H1 (cell line): ENCODE measurements at regions of chr15 and their contacts with region 1.

Region 1: GRCh38 chr15:101014921-101015841 is 96.0 kb downstream of the LRRK1 start:
- DNase-seq: peak in 1 of 2 experiments; percentile 92
- H3K4me3 ChIP-seq: no peak overlapping the region
- H3K27ac ChIP-seq: no peak overlapping the region
- H3K4me1 ChIP-seq: peaks cover 0 to 9% (median 4%) of the 10 kb centered on the region in 4 experiments; a peak in 5 of 7 replicates
- H3K27me3 ChIP-seq: no peaks in the 10 kb centered on the region
- CTCF ChIP-seq: peak; percentile 88 to 97 (median 95)
- EP300 ChIP-seq: no peak
- POLR2A ChIP-seq: no peak
- RAD21 ChIP-seq: peak; percentile 98 to 99

Region 2: DNA sequence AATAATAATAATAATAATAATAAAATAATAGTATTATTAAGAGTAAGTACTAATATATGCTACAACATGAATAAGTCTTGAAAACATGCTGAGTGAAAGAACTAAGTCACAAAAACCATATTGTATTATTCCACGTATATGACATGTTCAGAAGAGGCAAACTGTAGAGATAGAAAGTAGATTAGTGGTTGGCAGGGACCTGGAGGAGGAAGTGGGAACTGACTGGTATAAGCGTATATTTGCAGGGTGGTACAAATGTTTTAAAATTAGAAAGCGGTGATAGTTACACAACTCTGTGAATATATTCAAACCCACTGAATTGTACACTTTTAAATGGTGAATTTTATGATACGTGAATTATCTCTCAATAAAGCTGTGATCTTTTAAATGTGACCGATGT is 63.2 kb before region 1 on chr15:
- CTCF ChIA-PET with region 1: no interaction called
- POLR2A ChIA-PET with region 1: no interaction called
- DNase-seq: no peak
- H3K4me3 ChIP-seq: no peak overlapping the region
- H3K27ac ChIP-seq: no peak overlapping the region
- H3K4me1 ChIP-seq: peaks cover 0 to 5% (median 2%) of the 10 kb centered on the region in 4 experiments; a peak in 3 of 7 replicates
- H3K27me3 ChIP-seq: no peaks in the 10 kb centered on the region
- CTCF ChIP-seq: no peak
- EP300 ChIP-seq: no peak
- POLR2A ChIP-seq: no peak
- RAD21 ChIP-seq: no peak

Region 3: DNA sequence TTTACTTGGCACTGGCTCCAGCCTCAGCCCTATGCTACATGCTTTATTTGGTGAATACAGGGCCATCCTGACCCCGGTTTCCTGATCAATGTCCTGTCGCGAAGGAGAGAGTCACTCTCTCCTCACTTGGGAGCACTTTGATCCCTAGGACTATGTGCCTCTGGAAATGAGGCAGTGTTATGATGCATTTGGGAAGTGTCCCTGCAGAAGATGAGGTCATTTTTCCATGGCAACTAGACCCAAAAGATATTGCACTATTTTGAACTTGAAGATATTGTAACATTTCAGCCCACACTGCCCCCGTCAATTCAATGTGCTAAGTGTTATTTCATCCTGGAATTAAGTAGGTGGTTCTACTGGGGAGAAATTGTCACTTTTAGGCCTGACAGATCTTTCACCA is 28.0 kb before region 1 on chr15:
- CTCF ChIA-PET with region 1: no interaction called
- POLR2A ChIA-PET with region 1: no interaction called
- DNase-seq: no peak
- H3K4me3 ChIP-seq: no peak overlapping the region
- H3K27ac ChIP-seq: no peak overlapping the region
- H3K4me1 ChIP-seq: peaks cover 0 to 2% (median 0%) of the 10 kb centered on the region in 4 experiments; a peak in 1 of 7 replicates
- H3K27me3 ChIP-seq: no peaks in the 10 kb centered on the region; a peak in 1 of 7 replicates
- CTCF ChIP-seq: no peak
- EP300 ChIP-seq: no peak
- POLR2A ChIP-seq: no peak
- RAD21 ChIP-seq: no peak

Region 4: DNA sequence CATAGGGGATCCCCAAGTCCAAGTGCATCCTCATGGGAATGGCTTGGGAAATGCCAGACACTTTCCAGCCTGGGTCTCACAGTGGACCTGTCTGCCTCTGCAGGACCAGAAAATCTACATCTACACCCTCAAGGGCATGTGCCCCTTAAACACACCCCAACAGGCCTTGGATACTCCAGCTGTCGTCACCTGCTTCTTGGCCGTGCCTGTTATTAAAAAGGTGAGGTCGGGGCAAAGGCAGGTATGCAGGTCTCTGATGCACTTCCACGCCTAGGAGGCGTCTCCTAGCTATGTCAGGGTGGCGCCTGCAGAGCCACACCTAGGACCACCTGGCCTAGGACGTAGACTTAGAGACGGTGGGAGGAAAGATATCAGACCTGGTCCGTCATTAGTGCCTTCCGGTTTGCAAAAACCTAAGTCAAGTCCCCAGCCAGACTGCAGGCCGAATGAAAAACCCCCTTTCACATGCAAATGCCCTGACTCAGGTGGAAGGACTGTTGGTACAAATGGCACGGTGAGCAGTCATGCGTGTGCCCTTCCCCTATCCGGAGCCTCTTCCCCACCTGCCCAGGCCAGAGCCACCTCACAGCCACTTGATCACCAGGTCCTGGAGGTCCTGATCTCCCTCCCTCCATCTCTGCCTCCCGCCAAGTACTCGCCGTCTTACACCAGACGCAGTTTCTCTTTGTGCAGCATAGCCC is 47.4 kb after region 1 on chr15:
- CTCF ChIA-PET with region 1: interaction called, 39 read pairs
- POLR2A ChIA-PET with region 1: interaction called, 3 read pairs
- DNase-seq: peak in 1 of 2 experiments; percentile 63
- H3K4me3 ChIP-seq: no peak overlapping the region
- H3K27ac ChIP-seq: no peak overlapping the region
- H3K4me1 ChIP-seq: peaks cover 13 to 33% (median 21%) of the 10 kb centered on the region in 4 experiments
- H3K27me3 ChIP-seq: no peaks in the 10 kb centered on the region
- CTCF ChIP-seq: no peak
- EP300 ChIP-seq: no peak
- POLR2A ChIP-seq: no peak
- RAD21 ChIP-seq: no peak

Region 5: GRCh38 chr15:101088788-101089583 is 73.8 kb after region 1 on chr15:
- CTCF ChIA-PET with region 1: interaction called, 72 read pairs
- POLR2A ChIA-PET with region 1: no interaction called
- DNase-seq: peak; percentile 34 to 98
- H3K4me3 ChIP-seq: no peak overlapping the region
- H3K27ac ChIP-seq: no peak overlapping the region
- H3K4me1 ChIP-seq: peaks cover 0 to 1% (median 0%) of the 10 kb centered on the region in 4 experiments; a peak in 3 of 7 replicates
- H3K27me3 ChIP-seq: no peaks in the 10 kb centered on the region
- CTCF ChIP-seq: peak; percentile 89 to 95 (median 89)
- EP300 ChIP-seq: 0 out of 3 replicates have a peak, but pooled peaks of 1 of the 2 experiments have one; percentile 37
- POLR2A ChIP-seq: no peak
- RAD21 ChIP-seq: peak; percentile 81 to 91

Region 6: GRCh38 chr15:101121511-101122090 is 106.4 kb after region 1 on chr15:
- CTCF ChIA-PET with region 1: interaction called, 12 read pairs
- POLR2A ChIA-PET with region 1: no interaction called
- DNase-seq: peak in 1 of 2 experiments; percentile 78
- H3K4me3 ChIP-seq: no peak overlapping the region
- H3K27ac ChIP-seq: no peak overlapping the region
- H3K4me1 ChIP-seq: peaks cover 0 to 12% (median 8%) of the 10 kb centered on the region in 4 experiments; a peak in 5 of 7 replicates
- H3K27me3 ChIP-seq: no peaks in the 10 kb centered on the region
- CTCF ChIP-seq: peak; percentile 18 to 34 (median 32); a peak in 3 of 4 replicates
- EP300 ChIP-seq: no peak
- POLR2A ChIP-seq: no peak
- RAD21 ChIP-seq: peak; percentile 38 to 49

Region 7: GRCh38 chr15:101242160-101242998 is 227.2 kb after region 1 on chr15:
- CTCF ChIA-PET with region 1: interaction called, 21 read pairs
- POLR2A ChIA-PET with region 1: no interaction called
- DNase-seq: no peak
- H3K4me3 ChIP-seq: no peak overlapping the region; a peak in 1 of 8 replicates
- H3K27ac ChIP-seq: no peak overlapping the region
- H3K4me1 ChIP-seq: peaks cover 3 to 23% (median 11%) of the 10 kb centered on the region in 4 experiments; a peak in 5 of 7 replicates
- H3K27me3 ChIP-seq: no peaks in the 10 kb centered on the region
- CTCF ChIP-seq: no peak
- EP300 ChIP-seq: no peak
- POLR2A ChIP-seq: no peak
- RAD21 ChIP-seq: no peak

Region 8: GRCh38 chr15:101269479-101270223 is 254.5 kb after region 1 on chr15:
- CTCF ChIA-PET with region 1: interaction called, 30 read pairs
- POLR2A ChIA-PET with region 1: interaction called, 3 read pairs
- DNase-seq: no peak
- H3K4me3 ChIP-seq: no peak overlapping the region
- H3K27ac ChIP-seq: no peak overlapping the region
- H3K4me1 ChIP-seq: peaks cover 0 to 2% (median 0%) of the 10 kb centered on the region in 4 experiments; a peak in 1 of 7 replicates
- H3K27me3 ChIP-seq: no peaks in the 10 kb centered on the region
- CTCF ChIP-seq: peak; percentile 70 to 82 (median 77)
- EP300 ChIP-seq: no peak
- POLR2A ChIP-seq: peak in 1 of 2 experiments; percentile 41; a peak in 1 of 3 replicates
- RAD21 ChIP-seq: peak; percentile 51 to 68